AG04450 (cell line): ENCODE measurements at regions of chr6 and their contacts with region 1.

Region 1: DNA sequence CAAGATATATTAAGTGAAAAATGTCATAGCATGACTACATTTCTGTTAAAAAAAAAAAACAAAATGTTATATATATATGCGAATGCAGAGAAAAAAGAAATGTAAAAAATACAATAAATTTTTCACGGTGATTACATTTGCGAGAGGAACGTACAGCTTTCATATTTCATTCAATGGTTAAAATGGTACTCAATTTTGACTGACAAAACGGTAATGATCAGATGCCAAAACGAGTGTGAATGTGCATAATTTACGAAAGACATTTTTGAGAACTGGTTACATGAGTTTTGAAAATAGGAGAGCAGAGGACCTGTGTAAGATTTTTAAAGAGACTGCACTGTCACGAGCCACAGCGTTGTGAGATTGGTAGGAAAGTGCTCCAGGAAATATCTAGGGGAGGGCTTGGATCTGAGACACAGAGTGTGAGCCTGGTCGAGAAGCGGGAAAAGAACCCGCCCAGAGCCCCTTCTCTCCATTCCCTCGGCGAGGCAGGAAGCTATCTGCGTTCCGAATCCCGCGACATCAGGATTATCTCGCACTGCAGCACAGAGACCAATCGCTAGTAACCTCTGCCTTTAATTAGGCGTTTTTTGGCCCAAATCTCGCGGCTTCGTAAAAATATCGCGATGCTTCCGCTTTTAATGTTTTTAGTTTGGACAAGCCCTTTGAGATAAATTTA is 28.5 kb downstream of the TRIM27 start:
- DNase-seq: peak; percentile 90
- H3K4me3 ChIP-seq: peak overlapping the region; percentile 79
- H3K27ac ChIP-seq: peak overlapping the region; percentile 98
- H3K27me3 ChIP-seq: no peaks in the 10 kb centered on the region
- CTCF ChIP-seq: no peak

Region 2: GRCh38 chr6:28907394-28907793 is 12.1 kb after region 1 on chr6:
- CTCF ChIA-PET with region 1: no interaction called
- POLR2A ChIA-PET with region 1: interaction called, 11 read pairs
- DNase-seq: peak; percentile 69
- H3K4me3 ChIP-seq: no peak overlapping the region
- H3K27ac ChIP-seq: peak overlapping the region; percentile 11
- H3K27me3 ChIP-seq: no peaks in the 10 kb centered on the region
- CTCF ChIP-seq: no peak

Region 3: DNA sequence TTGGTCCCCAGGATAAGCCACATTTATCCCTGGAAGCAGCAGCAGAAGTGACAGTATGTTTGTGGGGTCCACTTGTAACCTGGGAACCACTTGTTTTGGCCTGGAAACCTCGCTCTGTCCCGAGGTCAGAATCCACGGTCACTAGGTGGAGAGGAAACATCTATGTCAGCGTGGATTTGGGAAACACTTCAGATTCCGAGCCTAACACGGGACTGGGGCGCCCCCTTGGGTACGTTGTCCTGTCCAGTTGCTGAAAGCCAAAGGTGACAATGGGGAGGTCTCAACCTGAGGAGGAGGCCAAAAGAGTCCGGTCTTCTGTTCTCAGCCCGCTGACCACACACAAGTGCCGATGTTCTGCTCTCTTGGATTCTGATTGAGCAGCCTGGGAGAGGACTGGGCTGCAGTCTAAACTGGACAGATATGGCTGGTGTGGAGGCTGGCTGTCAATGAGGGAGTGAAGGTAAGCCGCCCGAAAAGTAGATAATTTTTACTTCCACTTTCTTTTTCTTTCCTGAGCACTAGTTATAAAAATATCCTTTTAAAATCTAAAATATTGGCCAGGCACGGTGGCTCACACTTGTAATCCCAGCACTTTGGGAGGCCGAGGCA is 790.5 kb after region 1 on chr6:
- CTCF ChIA-PET with region 1: no interaction called
- POLR2A ChIA-PET with region 1: no interaction called
- DNase-seq: no peak
- H3K4me3 ChIP-seq: no peak overlapping the region
- H3K27ac ChIP-seq: no peak overlapping the region
- H3K27me3 ChIP-seq: peaks cover 2% of the 10 kb centered on the region
- CTCF ChIP-seq: no peak